Left ventricle myocardium inferior (tissue), 1 donor: ENCODE measurements at regions of chr15 and their contacts with region 1.

Region 1: GRCh38 chr15:36691579-36692357 is 112.3 kb downstream of the CDIN1 start:
- DNase-seq: no peak
- H3K4me3 ChIP-seq: no peak overlapping the region
- H3K27ac ChIP-seq: no peak overlapping the region
- H3K4me1 ChIP-seq: no peaks in the 10 kb centered on the region
- H3K27me3 ChIP-seq: no peaks in the 10 kb centered on the region
- CTCF ChIP-seq: no peak

Region 2: DNA sequence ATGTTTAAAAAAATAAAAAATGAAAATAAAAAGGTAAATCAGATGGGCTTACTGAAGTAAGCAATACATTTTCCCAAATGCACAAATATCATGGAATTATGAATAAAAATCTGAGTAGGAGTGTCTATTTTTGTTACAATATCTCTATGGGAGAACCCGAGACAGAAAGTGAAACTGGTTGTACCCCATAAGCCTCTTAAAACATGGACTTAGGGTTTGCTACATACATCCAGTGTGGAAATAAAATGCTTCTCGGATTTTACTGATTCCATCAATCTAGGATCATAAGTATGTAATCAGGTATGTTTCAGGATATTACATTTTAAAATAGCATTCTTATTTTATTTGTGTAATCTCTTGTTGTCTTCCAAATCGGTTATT is 290.2 kb before region 1 on chr15:
- intact Hi-C with region 1: no loop called
- DNase-seq: no peak
- H3K4me3 ChIP-seq: peak overlapping the region; percentile 6
- H3K27ac ChIP-seq: no peak overlapping the region
- H3K4me1 ChIP-seq: no peaks in the 10 kb centered on the region
- H3K27me3 ChIP-seq: no peaks in the 10 kb centered on the region
- CTCF ChIP-seq: no peak

Region 3: GRCh38 chr15:36658312-36658711 is 33.5 kb before region 1 on chr15:
- intact Hi-C with region 1: loop called (anchors 5 kb)
- DNase-seq: no peak
- H3K4me3 ChIP-seq: no peak overlapping the region
- H3K27ac ChIP-seq: no peak overlapping the region
- H3K4me1 ChIP-seq: peaks cover 13% of the 10 kb centered on the region
- H3K27me3 ChIP-seq: no peaks in the 10 kb centered on the region
- CTCF ChIP-seq: no peak